ENCODE measurements at regions of chr10 and their contacts with region 1.

Region 1: DNA sequence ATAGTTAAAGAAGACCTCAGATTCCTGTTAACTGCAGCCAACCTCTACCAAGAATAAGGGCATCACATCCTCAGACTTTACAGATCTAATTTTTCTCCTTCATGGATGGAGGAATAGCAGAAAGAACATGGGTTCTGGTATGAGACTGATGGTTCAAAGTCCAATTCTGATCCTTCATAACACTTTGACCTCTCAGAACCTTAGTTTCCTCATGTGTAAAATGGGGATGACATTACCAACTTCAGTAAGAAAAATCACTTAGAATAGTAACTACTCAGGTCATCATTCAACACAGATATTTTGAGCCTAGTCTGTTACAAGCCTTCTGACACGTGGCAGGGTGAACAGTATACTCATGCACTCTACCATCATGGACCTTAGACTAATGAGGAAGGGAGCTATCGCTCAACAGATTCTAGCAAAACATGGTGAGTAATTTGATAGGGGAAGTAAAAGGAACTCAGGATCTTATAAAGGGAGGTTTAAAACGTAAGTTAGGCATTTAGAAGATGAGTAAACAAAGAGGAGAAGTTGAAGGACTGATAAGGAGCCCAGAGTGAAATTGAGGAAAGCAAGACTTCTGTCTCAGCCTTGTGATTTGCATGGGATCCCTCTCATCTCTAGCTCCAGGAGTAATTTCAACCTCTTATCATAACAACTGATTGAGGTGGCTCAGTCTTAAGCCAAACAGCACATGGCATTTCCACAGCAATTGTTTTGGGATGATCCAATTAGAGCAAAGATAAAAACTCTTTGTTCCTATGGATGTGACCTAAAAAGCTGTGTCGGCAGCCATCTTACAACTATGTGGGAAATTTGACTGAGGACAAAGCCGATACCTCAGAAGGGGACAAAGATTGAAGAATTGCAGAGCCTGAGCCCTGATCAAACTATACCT is 69.2 kb upstream of the TCF7L2 start:
- DNase-seq: peak; percentile 48 to 69 (median 61)
- H3K4me3 ChIP-seq: no peak overlapping the region
- H3K4me3 Mint-ChIP-seq: no peak overlapping the region
- H3K27ac ChIP-seq: no peak overlapping the region
- H3K27ac Mint-ChIP-seq: peak overlapping the region in 3 of 7 donors; percentile 27 to 81 (median 58)
- H3K4me1 ChIP-seq: peaks cover 26 to 29% of the 10 kb centered on the region in 2 donors
- H3K4me1 Mint-ChIP-seq: peaks cover 36% of the 10 kb centered on the region
- H3K27me3 ChIP-seq: peaks cover 0 to 2% of the 10 kb centered on the region in 2 donors
- H3K27me3 Mint-ChIP-seq: peaks cover 0 to 10% (median 4%) of the 10 kb centered on the region in 3 donors
- CTCF ChIP-seq: no peak

Region 2: DNA sequence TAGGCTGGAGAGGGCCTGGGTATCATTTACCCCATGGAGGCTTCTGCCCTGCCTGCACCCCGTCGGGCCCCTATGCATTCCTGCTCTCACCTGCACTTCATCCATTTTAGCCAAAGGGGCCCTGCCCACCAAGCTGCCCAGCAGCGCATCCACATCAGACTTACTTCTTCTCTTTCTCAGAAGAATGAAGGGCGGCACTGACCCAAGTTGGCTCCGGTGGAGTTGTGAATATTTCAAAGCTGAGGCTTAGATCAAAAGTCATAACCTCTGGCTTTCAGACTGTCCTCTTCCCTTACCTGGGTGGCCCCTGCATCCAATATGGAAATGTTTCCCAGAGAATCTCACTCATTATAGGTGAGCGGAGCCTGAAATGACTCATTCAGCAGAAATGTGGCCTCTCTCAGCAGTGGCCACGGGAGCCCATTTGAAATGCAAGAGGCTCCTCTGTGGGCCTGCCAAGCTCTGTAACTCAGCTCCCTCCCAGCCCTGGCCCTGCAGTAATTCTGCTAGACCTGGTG is 48.5 kb before region 1 on chr10:
- intact Hi-C with region 1: loop called in 1 of 2 experiments (anchors 10 kb)
- DNase-seq: no peak
- H3K4me3 ChIP-seq: no peak overlapping the region
- H3K4me3 Mint-ChIP-seq: no peak overlapping the region
- H3K27ac ChIP-seq: no peak overlapping the region
- H3K27ac Mint-ChIP-seq: peak overlapping the region in 1 of 7 donors; percentile 26
- H3K4me1 ChIP-seq: peaks cover 34 to 36% of the 10 kb centered on the region in 2 donors
- H3K4me1 Mint-ChIP-seq: peaks cover 46% of the 10 kb centered on the region
- H3K27me3 ChIP-seq: no peaks in the 10 kb centered on the region
- H3K27me3 Mint-ChIP-seq: peaks cover 0 to 3% (median 3%) of the 10 kb centered on the region in 3 donors
- CTCF ChIP-seq: no peak

Region 3: GRCh38 chr10:112842832-112843360 is 38.0 kb before region 1 on chr10:
- intact Hi-C with region 1: loop called (anchors 5 to 10 kb)
- DNase-seq: no peak
- H3K4me3 ChIP-seq: no peak overlapping the region
- H3K4me3 Mint-ChIP-seq: peak overlapping the region in 1 of 2 donors; percentile 11
- H3K27ac ChIP-seq: no peak overlapping the region
- H3K27ac Mint-ChIP-seq: peak overlapping the region in 2 of 7 donors; percentile 16 to 75
- H3K4me1 ChIP-seq: peaks cover 28 to 29% of the 10 kb centered on the region in 2 donors
- H3K4me1 Mint-ChIP-seq: peaks cover 27% of the 10 kb centered on the region
- H3K27me3 ChIP-seq: no peaks in the 10 kb centered on the region
- H3K27me3 Mint-ChIP-seq: peaks cover 0 to 14% (median 6%) of the 10 kb centered on the region in 3 donors
- CTCF ChIP-seq: no peak